ENCODE measurements at regions of chr6 and their contacts with region 1.

Region 1: DNA sequence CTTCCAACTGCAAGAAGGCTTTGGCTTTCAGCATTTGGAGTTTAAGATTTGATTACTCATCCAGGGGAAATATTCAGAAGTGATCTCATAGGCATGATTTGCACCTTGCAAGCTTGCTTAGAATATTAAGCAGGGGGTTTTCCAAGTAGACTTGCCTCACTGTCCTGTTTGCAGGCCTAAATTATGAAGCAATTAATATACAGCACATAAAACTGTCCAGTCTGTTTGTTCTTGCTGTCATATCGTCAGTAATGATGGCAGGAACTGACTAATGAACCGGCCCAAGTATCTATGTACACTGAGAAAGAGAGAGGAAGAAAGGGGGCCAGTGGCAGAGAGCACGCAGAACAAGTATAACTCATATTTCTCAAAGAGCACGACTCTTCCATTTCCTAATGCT is 212.5 kb upstream of the SUPT3H start:
- DNase-seq: no peak
- H3K4me3 ChIP-seq: no peak overlapping the region
- H3K27ac ChIP-seq: peak overlapping the region; percentile 21 to 85 (median 78)
- H3K4me1 ChIP-seq: peaks cover 0 to 40% (median 32%) of the 10 kb centered on the region in 4 donors
- H3K27me3 ChIP-seq: no peaks in the 10 kb centered on the region
- CTCF ChIP-seq: no peak
- EP300 ChIP-seq: peak; percentile 52 to 87 (median 72)
- POLR2A ChIP-seq: no peak

Region 2: DNA sequence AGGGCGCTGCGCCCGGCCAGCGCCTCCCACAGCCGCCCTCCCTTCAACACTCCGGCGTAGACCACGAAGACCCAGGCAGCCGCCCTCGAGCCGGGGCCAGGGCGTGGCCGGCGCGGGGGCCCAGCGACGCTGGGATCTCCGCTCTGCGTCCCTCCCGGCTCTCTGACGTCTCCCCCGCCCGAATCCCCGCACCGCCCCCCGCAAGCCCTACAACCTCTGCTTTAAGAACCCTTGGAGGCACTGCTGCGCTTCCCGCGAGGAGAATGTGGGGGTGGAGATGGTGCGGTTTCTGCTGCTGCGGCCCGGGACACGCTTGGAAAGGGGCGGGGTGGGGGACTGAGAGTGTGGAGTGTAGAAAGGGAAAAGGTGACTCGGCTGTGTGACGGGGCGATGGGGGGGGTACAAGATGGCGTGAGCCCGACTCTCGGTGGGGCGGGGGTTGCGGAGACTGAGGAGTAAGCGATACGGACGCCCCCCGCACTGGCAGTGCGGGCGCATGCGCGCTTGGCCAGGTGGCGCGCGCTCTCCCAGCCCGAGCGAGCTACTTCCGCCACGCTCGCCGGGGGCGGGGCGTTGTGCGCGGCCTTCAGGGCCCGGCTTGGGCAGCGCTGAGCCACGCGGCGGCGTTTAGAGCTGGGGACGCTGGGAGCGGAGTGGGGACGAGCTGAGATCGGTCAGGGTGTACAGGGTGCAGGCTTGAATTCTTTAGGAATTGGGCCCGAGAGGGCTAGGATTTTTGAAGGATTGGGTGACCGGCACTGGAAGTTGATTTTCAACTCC is 212.5 kb before region 1 on chr6 and contains the start of gene SUPT3H:
- intact Hi-C with region 1: loop called (anchors 5 kb)
- DNase-seq: peak; percentile 96
- H3K4me3 ChIP-seq: peak within 1 kb of the TSS; percentile 79 to 90 (median 86)
- H3K27ac ChIP-seq: peak within 1 kb of the TSS; percentile 97
- H3K4me1 ChIP-seq: peaks cover 0 to 17% (median 8%) of the 10 kb centered on the region in 4 donors
- H3K27me3 ChIP-seq: no peaks in the 10 kb centered on the region
- CTCF ChIP-seq: peak in 1 of 4 experiments; percentile 8
- EP300 ChIP-seq: no peak
- POLR2A ChIP-seq: peak; percentile 34 to 61
- total RNA-seq, gene SUPT3H: 10.6 to 18.2 (median 13.0) TPM

Region 3: DNA sequence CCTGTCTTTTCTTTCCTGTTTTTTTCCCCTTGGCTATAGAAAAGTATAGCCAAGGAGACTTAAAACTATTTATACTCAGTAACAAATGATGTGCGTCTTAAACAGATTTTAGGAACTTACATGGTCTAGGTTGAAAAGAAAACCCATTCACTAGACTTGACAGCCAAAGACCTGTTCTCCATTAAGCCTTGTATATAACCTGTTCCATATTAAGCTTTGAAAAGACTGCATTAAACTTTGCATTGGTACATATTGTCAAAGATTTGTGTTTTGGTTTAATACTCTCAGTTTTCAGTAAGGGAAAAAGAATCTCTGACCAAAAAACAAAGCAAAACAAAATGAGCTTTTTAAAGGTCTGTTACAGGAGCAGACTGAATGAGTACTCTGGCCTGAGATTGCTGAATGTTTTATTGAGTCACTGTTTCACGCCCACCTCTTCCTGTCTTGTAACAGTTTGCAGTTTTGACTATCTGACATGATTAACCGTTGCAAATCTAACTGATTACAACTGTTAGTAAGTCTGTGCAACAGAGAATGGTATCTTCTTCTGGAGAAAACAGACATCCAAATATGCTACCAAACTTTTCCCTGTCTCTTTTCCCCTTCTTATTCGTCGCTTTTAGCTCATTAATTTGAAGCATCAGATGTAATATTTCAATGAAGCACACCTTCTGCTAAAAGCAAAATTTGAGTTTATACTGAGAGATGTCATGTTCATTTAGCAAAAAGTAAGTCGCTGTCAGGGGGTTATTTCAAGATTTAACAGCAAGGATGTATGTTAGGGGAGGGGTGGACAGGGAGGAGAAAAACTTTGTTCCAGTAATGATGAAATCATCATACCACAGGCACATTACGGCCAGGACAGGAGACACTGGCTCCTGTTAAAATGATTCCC is 153.4 kb before region 1 on chr6:
- intact Hi-C with region 1: loop called (anchors 5 kb)
- DNase-seq: no peak
- H3K4me3 ChIP-seq: no peak overlapping the region
- H3K27ac ChIP-seq: peak overlapping the region in 2 of 4 donors; percentile 44 to 67
- H3K4me1 ChIP-seq: peaks cover 0 to 28% (median 11%) of the 10 kb centered on the region in 4 donors
- H3K27me3 ChIP-seq: no peaks in the 10 kb centered on the region
- CTCF ChIP-seq: no peak
- EP300 ChIP-seq: no peak
- POLR2A ChIP-seq: no peak

Region 4: DNA sequence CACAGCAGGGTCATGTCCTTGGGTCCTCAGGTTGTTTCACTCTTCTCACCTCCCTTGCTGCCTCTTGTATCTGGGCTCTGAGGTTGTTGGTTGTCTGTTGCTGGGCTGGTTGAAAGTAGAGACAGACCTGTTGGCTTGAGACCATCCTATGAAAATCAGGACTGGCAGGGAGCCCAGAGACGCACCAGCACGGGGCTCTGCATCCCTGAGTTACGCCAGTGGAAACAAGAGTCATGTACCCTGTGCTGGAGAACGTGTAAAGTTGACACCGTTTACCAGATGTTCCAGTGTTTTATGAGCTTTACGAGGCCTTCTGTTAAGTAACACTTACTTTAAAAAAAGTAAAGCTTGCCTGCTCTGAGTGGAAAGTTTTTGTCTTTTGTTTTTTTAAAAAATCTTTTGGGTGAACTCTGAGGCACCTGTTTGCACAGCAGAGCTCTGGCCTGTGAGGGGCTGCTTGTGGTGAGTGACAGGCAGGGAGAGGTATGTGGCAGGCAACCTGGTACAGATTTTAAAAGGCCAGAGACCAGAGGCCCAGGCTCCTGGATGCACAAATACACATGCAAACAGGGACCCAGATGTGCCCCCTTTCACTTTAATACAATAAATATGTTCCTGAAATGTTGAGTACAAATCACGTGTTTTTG is 47.5 kb after region 1 on chr6:
- intact Hi-C with region 1: loop called (anchors 1 kb)
- DNase-seq: peak; percentile 97
- H3K4me3 ChIP-seq: no peak overlapping the region
- H3K27ac ChIP-seq: peak overlapping the region in 3 of 4 donors; percentile 80 to 83 (median 82)
- H3K4me1 ChIP-seq: peaks cover 0 to 36% (median 33%) of the 10 kb centered on the region in 4 donors
- H3K27me3 ChIP-seq: no peaks in the 10 kb centered on the region
- CTCF ChIP-seq: no peak
- EP300 ChIP-seq: peak; percentile 98 to 99 (median 99)
- POLR2A ChIP-seq: no peak

Region 5: DNA sequence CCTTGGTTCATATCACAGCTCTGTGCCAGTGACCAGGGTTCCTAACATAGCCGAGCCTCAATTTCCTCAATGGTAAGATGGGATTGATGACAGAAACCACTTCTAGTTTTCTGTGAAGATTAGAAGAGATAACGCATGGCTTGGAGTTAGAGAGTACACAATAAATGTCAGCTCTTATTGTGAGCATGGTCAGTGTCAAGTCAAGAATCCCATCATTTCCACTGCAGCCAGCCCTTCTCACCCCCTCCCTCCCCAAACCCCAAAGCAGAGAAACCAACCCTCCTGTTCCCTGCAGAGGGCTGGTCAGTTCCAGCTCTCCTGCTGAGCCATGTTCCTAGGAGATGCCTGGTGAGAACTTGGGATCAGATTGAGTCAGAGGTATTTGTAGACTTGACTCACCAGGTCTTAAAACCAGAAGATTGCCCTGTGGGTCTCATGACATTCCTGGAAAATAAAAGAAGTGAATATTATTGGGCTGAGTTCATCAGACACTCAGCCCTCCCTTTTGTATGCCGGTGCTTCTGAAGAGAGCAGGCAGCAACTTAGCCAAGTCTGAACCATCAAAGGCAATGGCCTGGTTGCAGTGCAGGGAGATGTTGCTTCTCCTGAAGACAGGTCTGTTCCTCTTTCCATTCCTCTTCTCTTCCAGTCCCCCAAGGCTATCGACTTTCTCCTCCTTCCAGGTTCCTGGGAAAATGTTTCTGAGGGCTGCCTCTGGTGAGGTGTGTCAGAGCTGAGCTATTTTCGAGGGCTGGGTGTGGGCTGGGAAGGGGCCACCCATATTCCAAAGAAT is 65.6 kb after region 1 on chr6:
- intact Hi-C with region 1: loop called (anchors 5 kb)
- DNase-seq: no peak
- H3K4me3 ChIP-seq: no peak overlapping the region
- H3K27ac ChIP-seq: peak overlapping the region in 3 of 4 donors; percentile 57 to 69 (median 67)
- H3K4me1 ChIP-seq: peaks cover 0 to 18% (median 10%) of the 10 kb centered on the region in 4 donors
- H3K27me3 ChIP-seq: no peaks in the 10 kb centered on the region
- CTCF ChIP-seq: no peak
- EP300 ChIP-seq: peak in 2 of 4 donors; percentile 43 to 74
- POLR2A ChIP-seq: no peak

Region 6: DNA sequence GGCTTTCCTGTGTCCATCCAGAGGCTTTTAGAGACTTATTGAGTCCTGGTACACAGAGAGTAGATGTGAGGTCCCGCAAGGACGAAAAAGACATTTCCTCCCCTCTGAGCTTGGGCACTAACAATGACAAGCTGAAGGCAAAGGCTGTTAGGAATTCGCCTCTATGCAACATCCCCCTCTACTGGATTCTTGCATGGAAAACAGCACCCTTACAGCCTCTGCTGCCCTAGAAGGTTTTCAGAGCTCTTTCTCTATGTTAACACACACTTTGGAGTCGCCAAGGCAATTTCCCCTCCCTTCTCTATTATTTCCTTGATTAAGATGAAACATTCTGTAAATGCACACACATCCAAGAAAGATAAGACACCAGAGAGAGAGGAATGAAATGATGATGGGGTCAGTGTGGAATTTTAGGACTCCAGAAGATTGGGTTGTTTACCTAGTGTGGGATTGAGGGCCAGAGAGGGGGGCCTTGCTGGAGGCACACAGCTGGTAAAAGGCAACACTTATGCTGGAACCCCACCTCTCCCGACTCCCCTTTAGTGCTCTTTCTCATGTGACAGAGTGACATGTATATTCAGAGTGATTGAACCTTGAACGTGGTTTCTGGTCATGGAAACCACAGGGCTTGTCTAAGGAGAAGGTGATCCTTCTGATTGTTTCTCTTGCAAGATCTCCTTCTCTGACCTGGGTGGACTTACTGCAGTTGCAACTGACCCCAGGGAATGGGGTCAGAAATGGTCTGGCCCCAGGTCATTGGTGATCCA is 124.7 kb after region 1 on chr6:
- intact Hi-C with region 1: loop called (anchors 5 kb)
- DNase-seq: peak; percentile 77
- H3K4me3 ChIP-seq: no peak overlapping the region
- H3K27ac ChIP-seq: peak overlapping the region in 1 of 4 donors; percentile 5
- H3K4me1 ChIP-seq: peaks cover 0 to 16% (median 10%) of the 10 kb centered on the region in 4 donors
- H3K27me3 ChIP-seq: no peaks in the 10 kb centered on the region
- CTCF ChIP-seq: peak; percentile 75 to 80 (median 78)
- EP300 ChIP-seq: no peak
- POLR2A ChIP-seq: no peak

Measured in sigmoid colon (tissue), 7 donors.